ENCODE measurements at regions of chr20 and their contacts with region 1.

Region 1: GRCh38 chr20:38658879-38659596 is 57.4 kb downstream of the ARHGAP40 start:
- DNase-seq: peak in 1 of 2 experiments; percentile 78
- H3K4me3 ChIP-seq: no peak overlapping the region
- H3K27ac ChIP-seq: no peak overlapping the region
- H3K4me1 ChIP-seq: peaks cover 0 to 7% (median 2%) of the 10 kb centered on the region in 4 experiments; a peak in 3 of 7 replicates
- H3K27me3 ChIP-seq: peaks cover 0 to 2% (median 0%) of the 10 kb centered on the region in 4 experiments; a peak in 4 of 7 replicates
- CTCF ChIP-seq: peak; percentile 79 to 90 (median 88)
- EP300 ChIP-seq: no peak
- POLR2A ChIP-seq: no peak
- RAD21 ChIP-seq: peak; percentile 72 to 82

Region 2: GRCh38 chr20:38581013-38581412 is 78.0 kb before region 1 on chr20 and contains the start of gene ADIG:
- CTCF ChIA-PET with region 1: no interaction called
- POLR2A ChIA-PET with region 1: no interaction called
- DNase-seq: no peak
- H3K4me3 ChIP-seq: no peak within 1 kb of the TSS
- H3K27ac ChIP-seq: no peak within 1 kb of the TSS
- H3K4me1 ChIP-seq: peaks cover 0 to 4% (median 1%) of the 10 kb centered on the region in 4 experiments; a peak in 2 of 7 replicates
- H3K27me3 ChIP-seq: no peaks in the 10 kb centered on the region
- CTCF ChIP-seq: no peak
- EP300 ChIP-seq: no peak
- POLR2A ChIP-seq: no peak
- RAD21 ChIP-seq: no peak
- total RNA-seq, gene ADIG: not detected in 2 replicates

Region 3: DNA sequence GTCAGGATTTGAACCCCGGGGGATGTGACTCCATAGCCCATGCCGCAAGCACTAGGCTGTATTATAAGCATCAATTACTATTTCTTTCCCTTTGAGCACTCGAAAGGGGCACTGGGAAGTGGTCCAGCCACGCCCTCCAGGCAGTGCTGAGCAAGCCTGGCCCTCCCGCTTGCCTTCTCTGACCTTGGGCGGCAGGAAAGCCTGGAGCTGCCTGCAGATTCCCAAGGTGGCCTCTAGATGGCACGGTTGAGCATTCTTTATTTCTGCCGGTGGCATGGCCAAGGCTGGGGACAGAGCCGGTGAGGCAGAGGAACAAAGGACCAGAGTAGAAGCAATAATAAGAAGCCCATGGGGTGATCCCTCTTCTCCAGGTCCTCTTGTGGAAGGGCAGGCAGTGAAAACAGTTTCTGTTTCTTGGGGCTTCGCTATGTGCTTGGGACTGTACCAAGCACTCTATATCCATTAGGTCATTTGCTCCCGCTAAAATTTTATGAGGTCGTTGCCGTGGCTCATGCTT is 25.4 kb before region 1 on chr20:
- CTCF ChIA-PET with region 1: interaction called, 13 read pairs
- POLR2A ChIA-PET with region 1: no interaction called
- DNase-seq: peak; percentile 51 to 91
- H3K4me3 ChIP-seq: no peak overlapping the region
- H3K27ac ChIP-seq: no peak overlapping the region
- H3K4me1 ChIP-seq: peaks cover 0 to 6% (median 2%) of the 10 kb centered on the region in 4 experiments; a peak in 3 of 7 replicates
- H3K27me3 ChIP-seq: peaks cover 0 to 2% (median 0%) of the 10 kb centered on the region in 4 experiments; a peak in 1 of 7 replicates
- CTCF ChIP-seq: peak; percentile 75 to 97 (median 86)
- EP300 ChIP-seq: no peak
- POLR2A ChIP-seq: no peak
- RAD21 ChIP-seq: peak; percentile 54 to 74

Region 4: GRCh38 chr20:38674092-38674764 is 15.2 kb after region 1 on chr20:
- CTCF ChIA-PET with region 1: interaction called, 80 read pairs
- POLR2A ChIA-PET with region 1: interaction called, 3 read pairs
- DNase-seq: peak; percentile 71 to 91
- H3K4me3 ChIP-seq: peak overlapping the region; percentile 60 to 86 (median 69)
- H3K27ac ChIP-seq: no peak overlapping the region
- H3K4me1 ChIP-seq: peaks cover 2 to 17% (median 10%) of the 10 kb centered on the region in 4 experiments; a peak in 5 of 7 replicates
- H3K27me3 ChIP-seq: peaks cover 3 to 38% (median 18%) of the 10 kb centered on the region in 4 experiments
- CTCF ChIP-seq: no peak
- EP300 ChIP-seq: no peak
- POLR2A ChIP-seq: peak in 1 of 2 experiments; percentile 42; a peak in 1 of 3 replicates
- RAD21 ChIP-seq: no peak

Region 5: GRCh38 chr20:38685853-38686473 is 26.9 kb after region 1 on chr20:
- CTCF ChIA-PET with region 1: interaction called, 37 read pairs
- POLR2A ChIA-PET with region 1: interaction called, 3 read pairs
- DNase-seq: peak in 1 of 2 experiments; percentile 85
- H3K4me3 ChIP-seq: no peak overlapping the region
- H3K27ac ChIP-seq: no peak overlapping the region
- H3K4me1 ChIP-seq: no peaks in the 10 kb centered on the region
- H3K27me3 ChIP-seq: peaks cover 0 to 10% (median 1%) of the 10 kb centered on the region in 4 experiments; a peak in 2 of 7 replicates
- CTCF ChIP-seq: no peak
- EP300 ChIP-seq: no peak
- POLR2A ChIP-seq: no peak
- RAD21 ChIP-seq: 0 out of 4 replicates have a peak, but pooled peaks of 1 of the 2 experiments have one; percentile 5

Region 6: DNA sequence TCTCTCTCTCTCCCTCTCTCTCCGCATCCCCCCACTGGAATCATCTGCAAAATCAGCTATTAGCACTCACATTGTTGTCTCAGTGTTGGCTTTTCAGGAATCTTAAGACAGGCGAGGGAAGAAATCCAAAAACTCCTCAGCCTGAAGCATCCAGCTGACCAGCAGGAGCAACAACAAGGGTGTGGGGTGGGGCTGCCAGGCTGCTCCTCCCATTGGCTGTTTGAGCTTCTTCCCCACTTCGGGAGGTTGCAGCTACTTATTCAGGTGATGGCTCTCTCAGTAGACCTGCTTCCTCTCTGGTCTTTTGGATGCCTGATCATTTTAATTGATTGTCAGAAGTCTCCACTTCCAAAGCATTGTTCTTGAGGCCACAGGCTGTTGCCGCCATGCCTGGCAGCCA is 41.1 kb after region 1 on chr20:
- CTCF ChIA-PET with region 1: interaction called, 29 read pairs
- POLR2A ChIA-PET with region 1: no interaction called
- DNase-seq: no peak
- H3K4me3 ChIP-seq: no peak overlapping the region
- H3K27ac ChIP-seq: no peak overlapping the region
- H3K4me1 ChIP-seq: no peaks in the 10 kb centered on the region
- H3K27me3 ChIP-seq: no peaks in the 10 kb centered on the region; a peak in 1 of 7 replicates
- CTCF ChIP-seq: no peak
- EP300 ChIP-seq: no peak
- POLR2A ChIP-seq: no peak
- RAD21 ChIP-seq: no peak

Region 7: DNA sequence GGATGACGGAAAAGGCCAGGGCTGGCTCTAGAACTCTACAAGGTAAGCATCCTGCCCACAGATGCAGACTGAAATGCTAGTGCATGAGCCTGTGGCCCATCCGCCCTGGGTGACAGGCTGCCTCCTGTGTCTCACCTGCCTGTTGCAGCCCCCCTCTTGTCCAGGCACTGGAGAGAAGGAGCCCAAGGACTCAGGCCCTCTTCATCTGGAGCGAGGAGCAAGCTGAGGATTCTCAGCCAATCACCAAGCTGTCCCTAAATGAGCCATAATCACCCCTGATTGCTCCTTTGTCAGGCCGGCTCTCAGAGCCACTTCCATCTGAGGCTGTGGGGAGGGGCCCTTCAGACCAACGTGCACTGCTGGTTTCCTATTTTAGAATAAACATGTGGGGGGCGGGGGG is 55.3 kb after region 1 on chr20:
- CTCF ChIA-PET with region 1: interaction called, 29 read pairs
- POLR2A ChIA-PET with region 1: no interaction called
- DNase-seq: no peak
- H3K4me3 ChIP-seq: no peak overlapping the region
- H3K27ac ChIP-seq: no peak overlapping the region
- H3K4me1 ChIP-seq: peaks cover 0 to 3% (median 0%) of the 10 kb centered on the region in 4 experiments; a peak in 1 of 7 replicates
- H3K27me3 ChIP-seq: peaks cover 2 to 13% (median 7%) of the 10 kb centered on the region in 4 experiments; a peak in 5 of 7 replicates
- CTCF ChIP-seq: no peak
- EP300 ChIP-seq: no peak
- POLR2A ChIP-seq: no peak
- RAD21 ChIP-seq: no peak